ENCODE measurements at regions of chrX and their contacts with region 1.

Region 1: DNA sequence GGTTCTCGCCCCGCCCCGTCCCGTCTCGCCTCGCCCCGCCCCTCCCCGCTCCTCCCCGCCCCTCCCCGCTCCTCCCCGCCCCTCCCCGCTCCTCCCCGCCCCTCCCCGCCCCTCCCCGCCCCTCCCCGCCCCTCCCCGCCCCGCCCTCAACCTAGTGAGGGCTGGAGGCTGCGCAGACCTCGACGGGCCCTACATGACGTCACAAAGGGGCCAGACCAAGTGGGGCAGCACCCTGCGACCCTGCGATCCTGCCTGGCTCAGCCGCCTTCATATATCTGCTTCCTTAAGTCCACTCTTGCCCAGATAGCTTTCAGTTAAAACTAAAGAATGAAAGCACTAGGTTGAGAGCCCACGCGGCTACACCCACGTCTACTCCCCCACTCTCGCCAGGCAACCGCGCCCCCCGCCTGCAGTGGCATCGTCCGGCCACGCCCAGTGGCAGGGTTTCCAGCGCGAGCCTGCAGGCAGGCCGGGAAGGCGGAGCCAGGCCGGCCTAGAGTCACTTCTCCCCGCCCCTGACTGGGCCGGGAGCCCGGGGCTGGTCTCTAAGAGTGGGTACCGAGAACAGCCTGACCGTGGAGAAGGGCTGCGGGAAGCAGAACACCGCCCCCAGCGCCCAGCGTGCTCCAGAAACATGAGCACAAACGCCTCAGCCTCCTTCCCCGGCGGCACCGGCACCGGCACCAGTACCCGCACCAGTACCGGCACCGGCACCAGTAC is 1.5 kb upstream of the MAOA start:
- DNase-seq: peak; percentile 91 to 92
- ATAC-seq: peak; percentile 97 to 99 (median 98)
- H3K4me3 ChIP-seq: peak overlapping the region; percentile 60 to 88 (median 72)
- H3K27ac ChIP-seq: peak overlapping the region; percentile 75 to 94 (median 91)
- H3K4me1 ChIP-seq: peaks cover 0 to 12% (median 0%) of the 10 kb centered on the region in 9 donors
- H3K27me3 ChIP-seq: peaks cover 0 to 15% (median 0%) of the 10 kb centered on the region in 7 donors
- CTCF ChIP-seq: peak in 8 of 9 donors; percentile 7 to 58 (median 30)

Region 2: GRCh38 chrX:43589735-43590134 is 64.9 kb before region 1 on chrX:
- intact Hi-C with region 1: loop called in 1 of 10 experiments (anchors 10 kb)
- DNase-seq: no peak
- ATAC-seq: peak in 4 of 8 donors; percentile 47 to 86 (median 66)
- H3K4me3 ChIP-seq: no peak overlapping the region
- H3K27ac ChIP-seq: peak overlapping the region in 2 of 10 donors; percentile 0 to 22
- H3K4me1 ChIP-seq: peaks cover 0 to 10% (median 4%) of the 10 kb centered on the region in 9 donors
- H3K27me3 ChIP-seq: peaks cover 0 to 10% (median 0%) of the 10 kb centered on the region in 7 donors
- CTCF ChIP-seq: no peak

Region 3: DNA sequence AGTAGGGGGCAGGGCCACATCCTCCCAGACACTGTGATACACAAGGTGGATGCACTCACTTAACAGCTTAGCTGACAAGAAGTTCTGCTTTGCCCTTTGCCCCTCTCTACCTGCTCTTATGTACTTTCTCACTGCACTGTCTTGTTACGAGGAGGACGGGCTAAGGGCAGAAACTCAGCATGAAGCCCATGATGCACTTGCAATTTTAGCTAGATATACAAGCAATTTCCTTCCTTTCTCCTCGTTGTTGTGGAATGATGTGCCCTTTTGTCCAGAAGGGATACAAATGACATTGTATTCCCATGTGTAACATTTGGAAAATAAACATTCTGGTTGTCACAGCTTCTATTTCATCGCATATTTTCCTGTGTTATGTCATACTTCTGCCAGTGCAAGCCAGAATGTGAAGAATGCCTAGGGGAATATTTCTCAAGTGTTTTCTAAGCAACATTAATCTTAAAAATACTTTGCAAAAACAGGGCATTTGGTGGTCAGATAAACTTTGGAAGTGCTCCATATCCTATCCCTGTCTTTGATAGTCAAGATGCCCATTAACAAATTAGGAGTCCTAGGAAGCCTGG is 48.7 kb after region 1 on chrX:
- intact Hi-C with region 1: loop called in 6 of 10 experiments (anchors 2 to 10 kb)
- DNase-seq: no peak
- ATAC-seq: peak; percentile 39 to 72 (median 56)
- H3K4me3 ChIP-seq: no peak overlapping the region
- H3K27ac ChIP-seq: peak overlapping the region; percentile 12 to 85 (median 71)
- H3K4me1 ChIP-seq: peaks cover 0 to 52% (median 29%) of the 10 kb centered on the region in 9 donors
- H3K27me3 ChIP-seq: peaks cover 0 to 62% (median 0%) of the 10 kb centered on the region in 7 donors
- CTCF ChIP-seq: no peak

Region 4: GRCh38 chrX:43715118-43715517 is 60.5 kb after region 1 on chrX:
- intact Hi-C with region 1: no loop called
- DNase-seq: no peak
- ATAC-seq: no peak
- H3K4me3 ChIP-seq: no peak overlapping the region
- H3K27ac ChIP-seq: no peak overlapping the region
- H3K4me1 ChIP-seq: peaks cover 0 to 11% (median 0%) of the 10 kb centered on the region in 9 donors
- H3K27me3 ChIP-seq: no peaks in the 10 kb centered on the region
- CTCF ChIP-seq: no peak

Region 5: DNA sequence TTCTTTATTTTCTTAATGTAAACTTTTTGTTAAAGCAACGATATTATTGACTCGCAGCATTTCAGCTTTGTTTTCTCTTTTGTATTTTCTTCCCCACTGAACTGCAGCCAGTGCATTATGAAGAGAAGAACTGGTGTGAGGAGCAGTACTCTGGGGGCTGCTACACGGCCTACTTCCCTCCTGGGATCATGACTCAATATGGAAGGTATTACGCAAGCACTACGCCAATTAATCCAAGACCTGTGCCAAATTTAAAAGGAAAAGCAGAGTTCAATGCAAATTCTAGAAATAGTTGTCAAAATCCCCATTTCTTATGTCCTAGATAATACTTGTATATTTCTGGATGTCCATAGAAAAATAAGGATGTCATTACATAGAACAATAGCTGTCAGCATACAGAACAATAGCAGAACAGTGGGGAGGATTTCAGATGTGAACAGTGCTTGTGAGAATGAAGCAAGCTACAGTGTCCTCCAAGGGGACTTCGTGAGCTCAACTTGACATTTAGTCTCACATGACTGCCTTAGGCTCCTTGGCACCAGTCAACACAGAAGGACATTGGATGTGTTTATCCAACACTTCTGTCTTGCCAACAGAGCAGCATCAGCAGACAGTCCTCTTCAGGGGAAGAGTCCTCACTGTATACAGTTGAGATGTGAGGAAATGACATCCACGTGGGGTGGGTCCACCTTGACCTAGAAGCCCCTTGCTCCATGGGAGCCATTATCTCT is 87.4 kb after region 1 on chrX:
- intact Hi-C with region 1: loop called in 9 of 10 experiments (anchors 5 to 10 kb)
- DNase-seq: peak in 1 of 2 donors; percentile 24
- ATAC-seq: peak; percentile 67 to 94 (median 87)
- H3K4me3 ChIP-seq: no peak overlapping the region
- H3K27ac ChIP-seq: peak overlapping the region in 5 of 10 donors; percentile 10 to 47 (median 37)
- H3K4me1 ChIP-seq: peaks cover 0 to 26% (median 11%) of the 10 kb centered on the region in 9 donors
- H3K27me3 ChIP-seq: peaks cover 0 to 46% (median 0%) of the 10 kb centered on the region in 7 donors
- CTCF ChIP-seq: no peak

Region 6: GRCh38 chrX:43750248-43750676 is 95.7 kb after region 1 on chrX:
- intact Hi-C with region 1: loop called in 6 of 10 experiments (anchors 1 to 10 kb)
- DNase-seq: peak in 1 of 2 donors; percentile 44
- ATAC-seq: peak; percentile 61 to 90 (median 85)
- H3K4me3 ChIP-seq: no peak overlapping the region
- H3K27ac ChIP-seq: no peak overlapping the region
- H3K4me1 ChIP-seq: peaks cover 0 to 8% (median 0%) of the 10 kb centered on the region in 9 donors
- H3K27me3 ChIP-seq: peaks cover 0 to 13% (median 0%) of the 10 kb centered on the region in 7 donors
- CTCF ChIP-seq: peak; percentile 23 to 67 (median 56)